ENCODE measurements at regions of chr3 and their contacts with region 1.

Region 1: DNA sequence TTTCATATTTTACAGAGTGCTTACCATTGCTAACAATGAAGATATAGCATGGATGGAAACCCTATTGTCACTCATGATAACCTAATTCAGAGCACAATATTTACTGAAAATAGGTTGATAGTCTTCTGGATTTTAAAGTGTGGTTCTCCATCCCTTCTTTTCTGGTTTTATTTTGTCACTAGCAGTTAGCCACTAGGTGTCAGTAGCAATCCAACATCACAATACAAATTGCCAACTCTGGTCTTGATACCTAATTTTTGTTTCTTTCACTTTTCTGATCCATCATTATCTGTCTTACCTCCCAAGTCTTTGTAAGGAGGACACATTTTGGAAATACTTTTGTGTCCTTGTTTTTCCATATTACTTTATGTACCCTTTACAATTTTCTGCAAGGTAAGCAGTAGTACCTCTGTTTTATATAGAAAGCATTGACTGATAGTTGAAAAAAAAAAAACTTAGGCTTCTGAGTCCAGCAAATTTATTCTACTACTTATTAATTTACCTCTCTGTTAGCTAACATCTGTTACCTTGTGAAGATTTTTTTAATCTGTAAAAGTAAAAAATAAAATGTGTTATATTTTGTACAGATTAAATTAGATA is 28.3 kb upstream of the CRYBG3 start:
- DNase-seq: peak; percentile 61
- ATAC-seq: no peak
- H3K4me3 ChIP-seq: no peak overlapping the region
- H3K27ac ChIP-seq: no peak overlapping the region
- H3K4me1 ChIP-seq: no peaks in the 10 kb centered on the region
- H3K27me3 ChIP-seq: no peaks in the 10 kb centered on the region
- CTCF ChIP-seq: peak; percentile 80; the same call in 1 of the 2 replicates

Region 2: GRCh38 chr3:96863129-96863740 is 930.3 kb before region 1 on chr3:
- CTCF ChIA-PET with region 1: interaction called, 18 read pairs
- POLR2A ChIA-PET with region 1: no interaction called
- in situ Hi-C with region 1: no loop called
- intact Hi-C with region 1: no loop called
- DNase-seq: peak; percentile 2
- ATAC-seq: no peak
- H3K4me3 ChIP-seq: no peak overlapping the region
- H3K27ac ChIP-seq: no peak overlapping the region
- H3K4me1 ChIP-seq: no peaks in the 10 kb centered on the region
- H3K27me3 ChIP-seq: no peaks in the 10 kb centered on the region
- CTCF ChIP-seq: peak; percentile 80; the same call in 1 of the 2 replicates

Region 3: DNA sequence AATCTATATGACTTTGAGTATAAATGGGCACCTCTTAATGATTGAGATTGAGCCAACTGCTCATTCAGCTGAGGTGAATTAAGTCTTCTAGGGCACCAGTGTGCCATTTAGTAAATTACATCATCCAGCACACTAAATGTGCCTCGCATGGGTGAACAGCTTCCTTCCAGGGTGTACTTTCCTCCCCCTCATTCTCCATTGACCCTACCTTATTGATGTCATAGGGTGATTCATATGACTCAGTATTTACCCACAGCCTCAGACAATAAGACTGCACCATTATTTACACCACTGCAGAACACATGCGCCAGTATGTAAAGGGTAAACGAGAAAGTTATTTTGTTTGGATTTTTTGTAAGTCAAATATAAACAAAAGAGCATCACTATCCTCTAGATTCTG is 214.2 kb before region 1 on chr3:
- CTCF ChIA-PET with region 1: no interaction called
- POLR2A ChIA-PET with region 1: no interaction called
- in situ Hi-C with region 1: no loop called
- intact Hi-C with region 1: no loop called
- DNase-seq: no peak
- ATAC-seq: no peak
- H3K4me3 ChIP-seq: no peak overlapping the region
- H3K27ac ChIP-seq: no peak overlapping the region
- H3K4me1 ChIP-seq: no peaks in the 10 kb centered on the region
- H3K27me3 ChIP-seq: no peaks in the 10 kb centered on the region
- CTCF ChIP-seq: no peak

Region 4: DNA sequence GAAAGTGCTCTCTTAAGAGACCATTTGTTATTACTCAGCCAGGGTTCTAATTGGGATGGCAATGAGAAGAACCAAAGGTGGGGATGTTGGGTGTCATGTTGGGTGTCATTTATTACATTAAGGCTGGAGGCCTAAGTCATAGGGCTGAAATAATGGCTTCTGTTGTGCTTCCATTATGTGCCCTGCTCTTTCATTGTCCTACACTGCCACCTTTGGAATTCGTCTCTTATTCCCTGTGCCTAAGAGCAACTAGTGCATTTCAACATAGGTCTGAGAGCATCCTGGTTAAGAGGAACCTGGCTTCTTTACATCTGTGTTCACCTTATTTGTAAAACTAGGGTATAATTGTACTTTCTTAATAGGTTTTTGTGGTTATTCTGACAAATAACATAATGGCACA is 146.5 kb after region 1 on chr3:
- CTCF ChIA-PET with region 1: no interaction called
- POLR2A ChIA-PET with region 1: no interaction called
- in situ Hi-C with region 1: no loop called
- intact Hi-C with region 1: loop called (anchors 10 kb)
- DNase-seq: no peak
- ATAC-seq: peak; percentile 74; the same call in 1 of the 2 replicates
- H3K4me3 ChIP-seq: no peak overlapping the region
- H3K27ac ChIP-seq: no peak overlapping the region
- H3K4me1 ChIP-seq: no peaks in the 10 kb centered on the region
- H3K27me3 ChIP-seq: no peaks in the 10 kb centered on the region
- CTCF ChIP-seq: peak; percentile 20; the same call in 1 of the 2 replicates

Region 5: DNA sequence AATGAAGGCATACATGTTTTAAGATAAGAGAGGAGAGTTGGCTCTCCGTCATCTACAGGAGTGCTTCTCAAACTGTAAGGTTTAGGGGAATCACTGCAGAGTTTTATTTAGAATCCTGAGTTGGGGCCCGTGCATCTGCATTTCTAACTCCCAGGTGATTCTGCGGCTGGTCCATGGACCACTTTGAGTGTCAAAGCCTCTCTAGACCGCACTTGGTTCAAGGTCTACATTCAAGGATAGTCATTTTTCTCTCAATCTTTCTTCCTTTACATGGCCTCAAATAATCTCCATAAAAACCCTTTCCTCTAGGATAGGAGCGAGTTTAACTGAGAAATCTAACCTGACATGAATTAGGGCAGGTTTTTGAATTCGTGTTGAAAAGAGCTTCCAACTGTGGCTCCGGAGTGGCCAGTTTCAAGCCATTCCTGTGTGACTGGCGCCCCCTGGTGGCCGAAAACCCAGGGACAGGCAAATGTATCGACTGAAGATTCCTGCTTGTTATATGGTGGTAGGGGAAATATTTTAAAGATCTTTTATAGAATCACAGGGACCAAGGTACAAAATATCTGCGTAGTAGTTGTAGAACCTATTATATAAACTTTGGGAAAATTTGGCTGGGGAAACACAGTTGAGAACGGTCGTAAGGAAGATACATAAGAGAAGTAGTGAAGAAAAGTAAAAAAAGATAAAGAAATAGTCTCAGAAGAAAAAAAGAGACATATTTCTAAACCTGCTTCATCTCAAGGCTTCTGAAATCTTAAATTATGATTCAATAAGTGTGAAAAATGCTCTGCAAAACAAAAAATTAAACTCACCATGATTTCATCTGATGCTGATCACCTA is 229.7 kb after region 1 on chr3:
- CTCF ChIA-PET with region 1: interaction called, 5 read pairs
- POLR2A ChIA-PET with region 1: no interaction called
- in situ Hi-C with region 1: no loop called
- intact Hi-C with region 1: loop called (anchors 1 kb)
- DNase-seq: peak; percentile 33
- ATAC-seq: peak; percentile 92
- H3K4me3 ChIP-seq: no peak overlapping the region
- H3K27ac ChIP-seq: no peak overlapping the region
- H3K4me1 ChIP-seq: 0 out of 2 replicates have a peak, but pooled peaks cover 4% of the 10 kb centered on the region
- H3K27me3 ChIP-seq: peaks cover 4% of the 10 kb centered on the region; the same call in 1 of the 2 replicates
- CTCF ChIP-seq: peak; percentile 97

Region 6: DNA sequence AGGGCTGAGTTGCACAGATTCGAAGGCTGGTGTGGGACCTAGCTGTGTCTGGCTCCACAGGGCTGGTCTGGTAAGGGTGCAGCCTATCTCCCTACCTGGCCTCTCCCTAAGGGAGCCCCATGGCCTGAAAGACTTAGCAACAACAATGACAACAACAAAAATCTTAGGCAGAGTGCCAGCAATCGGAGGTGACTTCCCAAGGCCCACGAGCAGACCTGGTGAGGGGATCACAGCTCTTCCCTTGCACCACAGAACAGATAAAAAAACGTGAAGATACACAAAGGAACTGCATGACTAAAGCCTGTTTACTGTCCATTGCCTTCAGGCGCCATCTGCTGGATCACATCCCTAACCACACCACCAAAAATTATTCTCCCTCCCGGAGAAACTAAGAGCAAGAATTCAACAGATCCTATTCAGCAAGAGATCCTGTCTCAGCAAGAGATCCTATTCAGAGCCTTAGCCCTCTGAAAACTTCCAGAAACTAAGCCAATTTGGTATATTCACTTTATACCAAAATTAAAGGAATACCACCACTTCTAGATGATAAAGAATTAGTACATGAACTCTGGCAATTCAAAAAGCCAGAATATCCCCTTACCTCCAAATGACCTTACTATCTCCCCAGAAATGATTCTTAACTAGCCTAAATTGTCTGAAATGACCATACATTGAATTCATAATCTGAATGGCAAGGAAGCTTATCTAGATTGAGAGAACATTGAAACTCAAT is 536.0 kb after region 1 on chr3:
- CTCF ChIA-PET with region 1: no interaction called
- POLR2A ChIA-PET with region 1: no interaction called
- in situ Hi-C with region 1: no loop called
- intact Hi-C with region 1: loop called (anchors 10 kb)
- DNase-seq: peak; percentile 54
- ATAC-seq: peak; percentile 86
- H3K4me3 ChIP-seq: no peak overlapping the region
- H3K27ac ChIP-seq: no peak overlapping the region
- H3K4me1 ChIP-seq: no peaks in the 10 kb centered on the region
- H3K27me3 ChIP-seq: no peaks in the 10 kb centered on the region
- CTCF ChIP-seq: peak; percentile 87

Region 7: GRCh38 chr3:98388147-98388546 is 594.6 kb after region 1 on chr3:
- CTCF ChIA-PET with region 1: no interaction called
- POLR2A ChIA-PET with region 1: no interaction called
- in situ Hi-C with region 1: no loop called
- intact Hi-C with region 1: no loop called
- DNase-seq: no peak
- ATAC-seq: no peak
- H3K4me3 ChIP-seq: no peak overlapping the region
- H3K27ac ChIP-seq: no peak overlapping the region
- H3K4me1 ChIP-seq: no peaks in the 10 kb centered on the region
- H3K27me3 ChIP-seq: no peaks in the 10 kb centered on the region
- CTCF ChIP-seq: no peak